Heart left ventricle (tissue), 16 donors: ENCODE measurements at regions of chr1 and their contacts with region 1.

Region 1: GRCh38 chr1:181479137-181479745 is 4.1 kb upstream of the CACNA1E start:
- DNase-seq: peak in 4 of 5 donors; percentile 24 to 41 (median 37)
- ATAC-seq: peak; percentile 74 to 94 (median 90)
- H3K4me3 ChIP-seq: no peak overlapping the region
- H3K27ac ChIP-seq: no peak overlapping the region
- H3K4me1 ChIP-seq: peaks cover 0 to 14% (median 1%) of the 10 kb centered on the region in 12 donors
- H3K27me3 ChIP-seq: peaks cover 24 to 86% (median 45%) of the 10 kb centered on the region in 9 donors
- CTCF ChIP-seq: peak; percentile 61 to 87 (median 78)
- POLR2A ChIP-seq: no peak

Region 2: GRCh38 chr1:181676269-181676668 is 197.0 kb after region 1 on chr1:
- intact Hi-C with region 1: loop called (anchors 1 to 5 kb)
- DNase-seq: peak in 1 of 5 donors; percentile 9
- ATAC-seq: peak in 2 of 4 donors; percentile 39 to 43
- H3K4me3 ChIP-seq: no peak overlapping the region
- H3K27ac ChIP-seq: no peak overlapping the region
- H3K4me1 ChIP-seq: no peaks in the 10 kb centered on the region
- H3K27me3 ChIP-seq: peaks cover 0 to 42% (median 7%) of the 10 kb centered on the region in 9 donors
- CTCF ChIP-seq: peak in 9 of 12 donors; percentile 11 to 47 (median 31)
- POLR2A ChIP-seq: no peak

Region 3: GRCh38 chr1:181936768-181937581 is 457.7 kb after region 1 on chr1:
- intact Hi-C with region 1: loop called in 8 of 10 experiments (anchors 2 to 10 kb)
- DNase-seq: peak in 1 of 5 donors; percentile 11
- ATAC-seq: peak in 1 of 4 donors; percentile 41
- H3K4me3 ChIP-seq: no peak overlapping the region
- H3K27ac ChIP-seq: no peak overlapping the region
- H3K4me1 ChIP-seq: no peaks in the 10 kb centered on the region
- H3K27me3 ChIP-seq: peaks cover 0 to 4% (median 0%) of the 10 kb centered on the region in 9 donors
- CTCF ChIP-seq: peak; percentile 15 to 58 (median 45)
- POLR2A ChIP-seq: no peak

Region 4: GRCh38 chr1:182054698-182055326 is 575.6 kb after region 1 on chr1:
- intact Hi-C with region 1: loop called in 5 of 10 experiments (anchors 10 kb)
- DNase-seq: peak in 1 of 5 donors; percentile 20
- ATAC-seq: no peak
- H3K4me3 ChIP-seq: no peak overlapping the region
- H3K27ac ChIP-seq: no peak overlapping the region
- H3K4me1 ChIP-seq: no peaks in the 10 kb centered on the region
- H3K27me3 ChIP-seq: peaks cover 0 to 52% (median 15%) of the 10 kb centered on the region in 9 donors
- CTCF ChIP-seq: peak; percentile 16 to 55 (median 40)
- POLR2A ChIP-seq: no peak

Region 5: GRCh38 chr1:182069028-182069466 is 589.8 kb after region 1 on chr1:
- intact Hi-C with region 1: loop called in 2 of 10 experiments (anchors 5 to 10 kb)
- DNase-seq: peak in 4 of 5 donors; percentile 35 to 55 (median 43)
- ATAC-seq: peak in 3 of 4 donors; percentile 71 to 85 (median 75)
- H3K4me3 ChIP-seq: no peak overlapping the region
- H3K27ac ChIP-seq: no peak overlapping the region
- H3K4me1 ChIP-seq: peaks cover 0 to 4% (median 0%) of the 10 kb centered on the region in 12 donors
- H3K27me3 ChIP-seq: peaks cover 0 to 21% (median 0%) of the 10 kb centered on the region in 9 donors
- CTCF ChIP-seq: peak; percentile 42 to 79 (median 67)
- POLR2A ChIP-seq: no peak

Region 6: GRCh38 chr1:182397771-182398393 is 918.6 kb after region 1 on chr1:
- intact Hi-C with region 1: loop called in 1 of 10 experiments (anchors 5 kb)
- DNase-seq: no peak
- ATAC-seq: no peak
- H3K4me3 ChIP-seq: no peak overlapping the region
- H3K27ac ChIP-seq: no peak overlapping the region
- H3K4me1 ChIP-seq: peaks cover 0 to 38% (median 11%) of the 10 kb centered on the region in 12 donors
- H3K27me3 ChIP-seq: no peaks in the 10 kb centered on the region
- CTCF ChIP-seq: no peak
- POLR2A ChIP-seq: no peak